ENCODE measurements at regions of chr15 and their contacts with region 1.

Region 1: GRCh38 chr15:68277603-68278344 is at the start of gene FEM1B:
- DNase-seq: peak; percentile 88
- ATAC-seq: peak; percentile 81
- H3K4me3 Mint-ChIP-seq: peak within 1 kb of the TSS; percentile 93
- H3K27ac Mint-ChIP-seq: peak within 1 kb of the TSS; percentile 96
- H3K4me1 Mint-ChIP-seq: peaks cover 55% of the 10 kb centered on the region
- H3K27me3 Mint-ChIP-seq: no peaks in the 10 kb centered on the region
- CTCF ChIP-seq: no peak
- total RNA-seq, gene FEM1B: 42.2 and 47.7 TPM in 2 replicates

Region 2: GRCh38 chr15:67542420-67543347 is 735.1 kb before region 1 on chr15 and contains the start of gene MAP2K5:
- CTCF ChIA-PET with region 1: no interaction called
- POLR2A ChIA-PET with region 1: no interaction called
- intact Hi-C with region 1: loop called (anchors 2 kb)
- DNase-seq: peak; percentile 76
- ATAC-seq: peak; percentile 73
- H3K4me3 Mint-ChIP-seq: peak within 1 kb of the TSS; percentile 94
- H3K27ac Mint-ChIP-seq: peak within 1 kb of the TSS; percentile 94
- H3K4me1 Mint-ChIP-seq: peaks cover 56% of the 10 kb centered on the region
- H3K27me3 Mint-ChIP-seq: peaks cover 5% of the 10 kb centered on the region
- CTCF ChIP-seq: no peak
- total RNA-seq, gene MAP2K5: 18.9 and 26.7 TPM in 2 replicates

Region 3: GRCh38 chr15:67564608-67565345 is 713.0 kb before region 1 on chr15:
- CTCF ChIA-PET with region 1: no interaction called
- POLR2A ChIA-PET with region 1: no interaction called
- intact Hi-C with region 1: no loop called
- DNase-seq: no peak
- ATAC-seq: peak; percentile 28
- H3K4me3 Mint-ChIP-seq: no peak overlapping the region
- H3K27ac Mint-ChIP-seq: no peak overlapping the region
- H3K4me1 Mint-ChIP-seq: peaks cover 21% of the 10 kb centered on the region
- H3K27me3 Mint-ChIP-seq: no peaks in the 10 kb centered on the region
- CTCF ChIP-seq: no peak

Region 4: DNA sequence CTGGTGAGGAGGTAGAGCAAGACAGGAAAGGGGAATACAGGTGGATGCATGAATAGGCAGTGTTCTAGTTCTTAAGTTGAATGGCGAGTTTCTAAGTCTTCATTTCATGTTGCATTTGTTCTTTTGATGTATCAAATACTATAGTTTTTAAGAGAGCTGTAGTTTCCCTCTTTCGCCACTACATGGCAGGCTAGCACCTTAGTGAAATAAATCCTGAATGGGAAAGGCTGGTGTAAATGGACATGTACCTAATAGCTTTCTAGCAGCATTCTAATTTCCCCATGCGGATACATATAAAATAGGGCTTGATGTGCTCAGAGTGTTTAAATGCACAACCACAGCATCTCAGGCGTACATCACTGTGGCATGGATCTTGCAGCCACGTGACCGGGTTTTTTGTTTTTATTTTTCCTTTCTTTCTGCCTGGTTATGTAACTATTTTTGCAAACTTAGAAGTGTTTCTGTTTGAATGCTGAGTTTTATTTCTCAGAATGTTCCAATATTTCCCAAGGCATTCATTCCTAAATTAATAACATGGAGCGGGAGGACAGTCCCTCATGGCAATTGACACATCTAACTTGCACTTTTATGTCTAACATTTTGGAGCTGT is 24.7 kb before region 1 on chr15:
- CTCF ChIA-PET with region 1: interaction called, 14 read pairs
- POLR2A ChIA-PET with region 1: interaction called, 10 read pairs
- intact Hi-C with region 1: no loop called
- DNase-seq: no peak
- ATAC-seq: peak; percentile 37
- H3K4me3 Mint-ChIP-seq: no peak overlapping the region
- H3K27ac Mint-ChIP-seq: no peak overlapping the region
- H3K4me1 Mint-ChIP-seq: peaks cover 4% of the 10 kb centered on the region
- H3K27me3 Mint-ChIP-seq: peaks cover 17% of the 10 kb centered on the region
- CTCF ChIP-seq: peak; percentile 34

Region 5: GRCh38 chr15:68298882-68299381 is 21.2 kb after region 1 on chr15:
- CTCF ChIA-PET with region 1: no interaction called
- POLR2A ChIA-PET with region 1: interaction called, 15 read pairs
- intact Hi-C with region 1: loop called (anchors 1 kb)
- DNase-seq: no peak
- ATAC-seq: peak; percentile 84
- H3K4me3 Mint-ChIP-seq: peak overlapping the region; percentile 79
- H3K27ac Mint-ChIP-seq: peak overlapping the region; percentile 77
- H3K4me1 Mint-ChIP-seq: peaks cover 19% of the 10 kb centered on the region
- H3K27me3 Mint-ChIP-seq: no peaks in the 10 kb centered on the region
- CTCF ChIP-seq: no peak

Region 6: GRCh38 chr15:68820295-68821189 is 542.8 kb after region 1 on chr15 and contains the start of gene ANP32A:
- CTCF ChIA-PET with region 1: no interaction called
- POLR2A ChIA-PET with region 1: interaction called, 12 read pairs
- intact Hi-C with region 1: loop called (anchors 5 kb)
- DNase-seq: peak; percentile 99
- ATAC-seq: peak; percentile 72
- H3K4me3 Mint-ChIP-seq: peak within 1 kb of the TSS; percentile 97
- H3K27ac Mint-ChIP-seq: peak within 1 kb of the TSS; percentile 97
- H3K4me1 Mint-ChIP-seq: peaks cover 32% of the 10 kb centered on the region
- H3K27me3 Mint-ChIP-seq: no peaks in the 10 kb centered on the region
- CTCF ChIP-seq: no peak
- total RNA-seq, gene ANP32A: 199 and 218 TPM in 2 replicates

Region 7: DNA sequence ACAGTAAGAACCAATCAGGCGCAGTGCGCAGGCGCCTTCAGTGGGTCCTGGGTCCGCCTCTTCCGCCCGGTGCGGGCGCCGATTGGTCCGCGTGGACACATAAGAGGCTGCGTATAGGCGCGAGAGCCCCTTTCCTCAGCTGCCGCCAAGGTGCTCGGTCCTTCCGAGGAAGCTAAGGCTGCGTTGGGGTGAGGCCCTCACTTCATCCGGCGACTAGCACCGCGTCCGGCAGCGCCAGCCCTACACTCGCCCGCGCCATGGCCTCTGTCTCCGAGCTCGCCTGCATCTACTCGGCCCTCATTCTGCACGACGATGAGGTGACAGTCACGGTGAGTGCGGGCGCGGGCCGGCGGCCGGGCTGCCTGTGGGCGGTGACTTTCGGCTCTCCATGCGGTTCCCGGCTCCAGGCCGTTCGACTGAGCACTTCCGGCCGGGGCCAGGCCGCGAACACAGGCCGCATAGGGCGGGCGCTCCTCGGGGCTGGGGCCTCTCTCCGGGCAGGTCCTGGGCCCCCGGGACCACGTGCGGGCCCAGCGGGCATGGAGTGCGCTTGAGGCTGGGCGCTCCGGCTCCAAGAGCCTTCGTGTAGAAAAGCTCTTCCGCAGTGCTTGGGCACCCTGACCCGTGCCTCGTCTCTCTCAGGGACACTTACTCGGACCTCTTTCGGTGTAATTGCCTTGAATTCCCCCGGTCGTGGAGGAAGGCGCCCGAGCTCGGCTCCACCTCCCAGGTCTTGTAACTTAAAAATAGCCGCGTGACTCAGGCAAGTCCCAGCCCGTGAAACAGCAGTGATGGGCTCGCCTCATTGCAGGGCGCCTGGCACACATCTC is 1175.1 kb after region 1 on chr15 and contains the start of gene RPLP1:
- CTCF ChIA-PET with region 1: no interaction called
- POLR2A ChIA-PET with region 1: interaction called, 3 read pairs
- intact Hi-C with region 1: loop called (anchors 2 kb)
- DNase-seq: peak; percentile 94
- ATAC-seq: peak; percentile 90
- H3K4me3 Mint-ChIP-seq: peak within 1 kb of the TSS; percentile 98
- H3K27ac Mint-ChIP-seq: peak within 1 kb of the TSS; percentile 99
- H3K4me1 Mint-ChIP-seq: peaks cover 46% of the 10 kb centered on the region
- H3K27me3 Mint-ChIP-seq: no peaks in the 10 kb centered on the region
- CTCF ChIP-seq: no peak
- total RNA-seq, gene RPLP1: 3,035 and 3,437 TPM in 2 replicates

Measured in activated B cell treated with CpG ODN at 0.5 μM for 24 hours (primary cell).